ENCODE measurements at regions of chr17 and their contacts with region 1.

Region 1: GRCh38 chr17:1628856-1629646 is 417 bp upstream of the SLC43A2 start:
- DNase-seq: peak; percentile 93
- H3K4me3 Mint-ChIP-seq: peak overlapping the region; percentile 82
- H3K27ac Mint-ChIP-seq: peak overlapping the region; percentile 80
- H3K4me1 Mint-ChIP-seq: peaks cover 26% of the 10 kb centered on the region
- H3K27me3 Mint-ChIP-seq: peaks cover 89% of the 10 kb centered on the region

Region 2: GRCh38 chr17:1573916-1574696 is 54.9 kb before region 1 on chr17:
- CTCF ChIA-PET with region 1: interaction called, 42 read pairs
- DNase-seq: peak; percentile 73
- H3K4me3 Mint-ChIP-seq: no peak overlapping the region
- H3K27ac Mint-ChIP-seq: no peak overlapping the region
- H3K4me1 Mint-ChIP-seq: peaks cover 17% of the 10 kb centered on the region
- H3K27me3 Mint-ChIP-seq: peaks cover 24% of the 10 kb centered on the region

Region 3: DNA sequence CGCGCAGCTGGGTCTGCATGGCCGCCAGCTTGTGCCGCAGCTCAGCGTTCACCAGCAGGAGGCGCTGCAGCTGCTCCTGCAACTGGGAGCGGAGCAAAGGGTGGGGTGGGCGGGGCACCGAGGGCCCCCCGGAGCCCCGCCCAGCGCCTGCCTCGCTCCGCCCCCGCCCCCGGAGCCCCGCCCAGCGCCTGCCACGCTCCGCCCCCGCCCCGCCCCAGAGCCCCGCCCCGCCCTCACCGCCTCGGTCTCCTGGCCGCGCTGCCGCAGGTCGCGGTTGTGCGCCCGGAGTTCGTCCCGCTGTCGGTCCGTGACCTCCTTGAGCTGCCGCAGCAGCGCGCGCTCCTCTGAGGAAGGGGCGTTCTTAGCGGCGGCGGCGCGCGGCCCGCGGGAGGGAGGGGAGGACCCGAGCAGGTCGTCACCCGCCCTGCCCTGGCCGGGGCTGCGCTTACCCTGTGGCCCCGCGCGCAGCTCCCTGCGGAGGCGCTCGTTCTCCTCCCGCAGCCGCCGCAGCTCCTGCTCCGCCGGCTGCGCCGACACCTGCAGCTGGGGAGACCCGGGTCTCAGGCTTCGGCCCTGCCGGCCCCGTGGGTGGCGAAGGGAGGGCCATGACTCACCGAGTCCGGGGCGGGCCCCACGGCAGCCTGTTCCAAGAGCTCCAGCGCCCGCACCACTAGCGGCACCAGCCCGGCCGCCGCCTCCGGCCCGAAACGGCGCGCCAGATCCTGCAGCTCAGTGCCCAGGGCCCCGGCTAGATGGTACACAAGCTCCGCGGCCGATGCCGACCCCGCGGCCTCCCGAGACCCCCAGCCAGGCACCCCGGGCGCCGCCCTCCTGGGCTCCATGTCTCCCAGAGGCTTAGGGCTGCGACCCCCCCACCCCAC is 20.2 kb after region 1 on chr17:
- CTCF ChIA-PET with region 1: interaction called, 11 read pairs
- DNase-seq: peak; percentile 96
- H3K4me3 Mint-ChIP-seq: peak overlapping the region; percentile 69
- H3K27ac Mint-ChIP-seq: peak overlapping the region; percentile 76
- H3K4me1 Mint-ChIP-seq: peaks cover 35% of the 10 kb centered on the region
- H3K27me3 Mint-ChIP-seq: peaks cover 33% of the 10 kb centered on the region

Measured in activated naive CD4-positive, alpha-beta T cell treated with anti-CD3 and anti-CD28 coated beads, Interleukin-2, amount 10 ng/mL, durations not matched to agents 7 days and 5 days (primary cell).